ENCODE measurements at regions of chr1 and their contacts with region 1.

Region 1: GRCh38 chr1:153749408-153750005 is 21.7 kb downstream of the INTS3 start:
- DNase-seq: peak; percentile 80
- ATAC-seq: peak; percentile 100
- H3K4me3 ChIP-seq: no peak overlapping the region
- H3K27ac ChIP-seq: no peak overlapping the region
- H3K4me1 ChIP-seq: peaks cover 2% of the 10 kb centered on the region
- H3K27me3 ChIP-seq: no peaks in the 10 kb centered on the region
- CTCF ChIP-seq: peak; percentile 97
- POLR2A ChIP-seq: no peak
- RAD21 ChIP-seq: peak; percentile 91

Region 2: DNA sequence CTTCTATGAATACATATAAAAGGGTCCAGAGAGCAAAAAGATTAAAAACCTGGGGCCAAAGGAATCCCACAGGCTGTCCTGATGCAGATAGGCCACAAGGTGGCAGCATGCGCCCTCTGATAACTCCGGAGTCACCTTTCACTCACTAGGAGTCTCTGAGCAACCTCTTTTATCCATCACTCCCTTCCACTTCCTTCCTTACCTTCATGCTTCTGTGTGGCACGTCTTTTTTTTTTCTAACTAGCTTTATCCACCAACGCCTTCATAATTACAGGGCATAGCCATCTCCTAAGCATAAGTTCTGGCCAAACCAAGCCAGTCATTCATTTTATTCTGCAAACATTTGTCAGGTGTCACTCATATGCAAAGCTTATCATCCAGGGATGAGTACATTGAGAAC is 397.0 kb before region 1 on chr1:
- CTCF ChIA-PET with region 1: no interaction called
- POLR2A ChIA-PET with region 1: no interaction called
- dilution Hi-C with region 1: no loop called
- in situ Hi-C with region 1: no loop called
- intact Hi-C with region 1: loop called (anchors 1 kb)
- DNase-seq: peak; percentile 62
- ATAC-seq: peak; percentile 93
- H3K4me3 ChIP-seq: no peak overlapping the region
- H3K27ac ChIP-seq: no peak overlapping the region
- H3K4me1 ChIP-seq: no peaks in the 10 kb centered on the region
- H3K27me3 ChIP-seq: peaks cover 4% of the 10 kb centered on the region; the same call in 1 of the 2 replicates
- CTCF ChIP-seq: peak; percentile 92
- POLR2A ChIP-seq: no peak
- RAD21 ChIP-seq: peak; percentile 91

Region 3: GRCh38 chr1:153670859-153671627 is 78.5 kb before region 1 on chr1 and contains the start of gene ILF2:
- CTCF ChIA-PET with region 1: interaction called, 3 read pairs
- POLR2A ChIA-PET with region 1: no interaction called
- dilution Hi-C with region 1: no loop called
- in situ Hi-C with region 1: loop called (anchors 5 kb)
- intact Hi-C with region 1: loop called (anchors 1 kb)
- DNase-seq: peak; percentile 100
- ATAC-seq: peak; percentile 93
- H3K4me3 ChIP-seq: peak within 1 kb of the TSS; percentile 65
- H3K27ac ChIP-seq: peak within 1 kb of the TSS; percentile 61
- H3K4me1 ChIP-seq: peaks cover 1% of the 10 kb centered on the region; the same call in 1 of the 2 replicates
- H3K27me3 ChIP-seq: no peaks in the 10 kb centered on the region
- CTCF ChIP-seq: peak; percentile 37
- POLR2A ChIP-seq: peak; percentile 97
- RAD21 ChIP-seq: no peak
- total RNA-seq, gene ILF2: 405 and 504 TPM in 2 replicates

Region 4: GRCh38 chr1:153677718-153678505 is 71.6 kb before region 1 on chr1:
- CTCF ChIA-PET with region 1: interaction called, 5 read pairs
- POLR2A ChIA-PET with region 1: no interaction called
- dilution Hi-C with region 1: no loop called
- in situ Hi-C with region 1: loop called (anchors 5 kb)
- intact Hi-C with region 1: loop called (anchors 1 kb)
- DNase-seq: peak; percentile 45
- ATAC-seq: peak; percentile 79
- H3K4me3 ChIP-seq: 0 out of 2 replicates have a peak overlapping the region, but pooled peaks have one; percentile 38
- H3K27ac ChIP-seq: no peak overlapping the region
- H3K4me1 ChIP-seq: peaks cover 7% of the 10 kb centered on the region; the same call in 1 of the 2 replicates
- H3K27me3 ChIP-seq: peaks cover 47% of the 10 kb centered on the region
- CTCF ChIP-seq: peak; percentile 87
- POLR2A ChIP-seq: no peak
- RAD21 ChIP-seq: peak; percentile 85